Posterior vena cava (tissue), 2 donors: ENCODE measurements at regions of chr14 and their contacts with region 1.

Region 1: GRCh38 chr14:75738192-75738591 is 77.1 kb downstream of the TTLL5 start:
- DNase-seq: no peak

Region 2: GRCh38 chr14:75022655-75023054 is 715.5 kb before region 1 on chr14:
- intact Hi-C with region 1: no loop called
- DNase-seq: no peak

Region 3: DNA sequence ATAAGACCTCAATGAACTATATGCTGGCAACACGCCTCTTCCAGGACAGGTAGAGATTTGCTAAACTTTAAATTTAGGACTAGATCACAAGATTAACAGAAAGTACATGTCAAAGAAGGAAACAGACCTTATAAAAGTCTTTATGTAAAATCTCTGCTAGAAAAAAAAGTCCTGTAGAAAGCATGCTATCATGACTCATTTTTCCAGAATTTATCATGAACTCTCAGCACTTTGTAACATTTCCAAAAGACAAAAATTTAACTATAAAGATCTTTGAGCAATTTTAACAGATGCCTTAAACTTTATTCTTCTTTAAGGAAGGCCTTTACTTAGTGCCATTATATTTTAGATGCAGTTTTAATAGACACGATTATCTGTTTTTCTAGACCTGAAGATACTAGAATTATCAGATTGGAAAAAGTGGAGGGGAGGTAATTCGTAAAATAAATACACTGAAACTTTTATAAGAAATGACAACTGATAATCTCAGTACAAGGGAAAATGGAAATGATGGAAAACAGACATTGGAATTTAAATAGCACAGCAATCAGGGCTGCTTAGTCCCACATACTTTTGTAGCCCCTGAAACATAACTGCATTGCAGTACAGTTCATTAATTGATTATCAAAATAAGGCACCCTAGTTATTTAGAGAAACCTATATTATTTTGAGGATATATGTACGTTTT is 14.9 kb after region 1 on chr14:
- intact Hi-C with region 1: loop called in 1 of 2 experiments (anchors 1 kb)
- DNase-seq: no peak